HEK293 (cell line): ENCODE measurements at regions of chr9 and their contacts with region 1.

Region 1: DNA sequence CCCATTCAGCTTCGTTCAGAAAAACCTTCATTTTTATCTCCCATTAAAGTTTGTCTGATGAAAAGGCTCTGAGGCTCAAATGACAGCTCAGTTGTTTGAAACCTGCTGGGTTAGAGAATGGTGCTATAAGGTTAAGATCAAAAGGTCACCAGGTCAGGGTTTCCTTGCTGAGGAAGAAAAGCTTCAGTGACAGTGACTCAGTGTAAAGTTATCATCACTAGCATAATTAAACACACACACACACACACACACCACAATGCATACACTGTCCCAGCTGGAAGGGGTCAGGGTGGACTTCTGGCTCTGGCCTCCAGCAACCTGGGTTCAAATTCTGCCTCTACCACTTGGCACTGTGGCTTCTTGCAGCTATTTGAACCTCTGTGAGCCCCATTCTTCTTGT is 281.1 kb downstream of the DOCK8 start:
- H3K4me3 ChIP-seq: no peak overlapping the region
- H3K27ac ChIP-seq: no peak overlapping the region
- H3K4me1 ChIP-seq: no peaks in the 10 kb centered on the region
- CTCF ChIP-seq: no peak

Region 2: DNA sequence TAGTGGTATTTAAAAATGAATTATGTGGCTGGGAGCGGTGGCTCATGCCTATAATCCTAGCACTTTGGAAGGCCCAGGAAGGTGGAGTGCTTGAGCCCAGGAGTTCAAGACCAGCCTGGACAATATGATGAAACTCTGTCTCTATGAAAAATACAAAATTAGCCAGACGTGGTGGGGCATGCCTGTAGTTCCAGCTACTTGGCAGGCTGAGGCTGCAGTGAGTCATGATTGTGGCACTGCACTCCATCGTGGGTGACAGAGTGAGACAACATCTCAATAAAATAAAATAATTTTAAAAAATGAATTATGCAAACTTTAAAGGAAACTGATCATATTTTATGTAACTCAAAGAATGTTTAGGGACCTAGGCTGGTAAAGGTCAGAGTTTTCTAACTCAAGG is 34.9 kb after region 1 on chr9:
- CTCF ChIA-PET with region 1: no interaction called
- POLR2A ChIA-PET with region 1: interaction called, 11 read pairs
- H3K4me3 ChIP-seq: no peak overlapping the region
- H3K27ac ChIP-seq: no peak overlapping the region
- H3K4me1 ChIP-seq: peaks cover 21% of the 10 kb centered on the region
- CTCF ChIP-seq: no peak